ENCODE measurements at regions of chr17 and their contacts with region 1.

Region 1: DNA sequence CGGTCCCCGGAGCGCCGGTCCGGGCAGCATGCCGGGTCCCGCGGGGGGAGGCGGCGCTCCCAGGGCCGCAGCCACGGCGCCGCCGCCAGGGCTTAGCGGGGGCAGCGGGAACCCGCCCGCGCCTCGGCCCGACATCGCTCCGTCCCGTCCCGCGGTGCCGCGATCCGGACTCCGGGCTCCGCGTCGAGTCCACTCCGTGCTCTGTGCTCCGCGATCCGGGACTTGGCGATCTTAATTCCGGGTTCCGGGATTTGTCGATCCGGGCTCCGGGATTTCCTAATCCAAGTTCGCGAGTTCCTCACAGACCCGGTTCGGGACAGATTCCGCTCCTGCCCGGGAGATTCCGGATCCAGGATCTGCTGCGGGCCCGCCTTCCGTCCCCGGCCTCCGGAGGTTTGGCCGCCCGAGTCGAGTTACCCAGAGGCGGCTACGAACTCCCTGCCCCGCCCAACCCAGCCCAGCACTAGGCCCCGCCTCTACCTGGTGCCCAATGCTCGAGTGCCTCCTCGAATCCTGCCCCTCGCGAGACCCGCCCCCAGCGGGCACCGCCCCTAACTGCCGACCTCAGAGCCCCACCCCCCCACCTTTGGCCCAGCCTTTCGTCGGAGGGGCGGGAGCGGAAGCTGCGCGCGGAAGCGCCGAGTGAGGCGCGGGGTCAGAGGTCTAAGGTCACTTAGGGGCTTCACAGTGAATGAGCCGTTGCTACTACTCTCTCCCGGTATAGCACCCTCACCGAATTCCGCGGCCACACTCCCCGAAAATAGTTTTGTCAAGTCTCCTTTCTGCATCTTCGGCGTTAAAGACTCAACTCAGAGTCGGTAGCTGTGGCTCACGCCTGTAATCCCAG is at the start of gene SMARCD2:
- DNase-seq: peak; percentile 99
- ATAC-seq: peak; percentile 67 to 68
- H3K4me3 ChIP-seq: peak within 1 kb of the TSS; percentile 77 to 96 (median 91)
- H3K27ac ChIP-seq: peak within 1 kb of the TSS; percentile 96 to 99 (median 96)
- H3K4me1 ChIP-seq: peaks cover 42 to 45% of the 10 kb centered on the region in 2 donors
- H3K27me3 ChIP-seq: no peaks in the 10 kb centered on the region
- CTCF ChIP-seq: peak in 3 of 5 experiments; percentile 23 to 54 (median 47)
- POLR2A ChIP-seq: peak; percentile 80 to 82
- total RNA-seq, gene SMARCD2: 30.2 to 64.3 (median 44.9) TPM

Region 2: DNA sequence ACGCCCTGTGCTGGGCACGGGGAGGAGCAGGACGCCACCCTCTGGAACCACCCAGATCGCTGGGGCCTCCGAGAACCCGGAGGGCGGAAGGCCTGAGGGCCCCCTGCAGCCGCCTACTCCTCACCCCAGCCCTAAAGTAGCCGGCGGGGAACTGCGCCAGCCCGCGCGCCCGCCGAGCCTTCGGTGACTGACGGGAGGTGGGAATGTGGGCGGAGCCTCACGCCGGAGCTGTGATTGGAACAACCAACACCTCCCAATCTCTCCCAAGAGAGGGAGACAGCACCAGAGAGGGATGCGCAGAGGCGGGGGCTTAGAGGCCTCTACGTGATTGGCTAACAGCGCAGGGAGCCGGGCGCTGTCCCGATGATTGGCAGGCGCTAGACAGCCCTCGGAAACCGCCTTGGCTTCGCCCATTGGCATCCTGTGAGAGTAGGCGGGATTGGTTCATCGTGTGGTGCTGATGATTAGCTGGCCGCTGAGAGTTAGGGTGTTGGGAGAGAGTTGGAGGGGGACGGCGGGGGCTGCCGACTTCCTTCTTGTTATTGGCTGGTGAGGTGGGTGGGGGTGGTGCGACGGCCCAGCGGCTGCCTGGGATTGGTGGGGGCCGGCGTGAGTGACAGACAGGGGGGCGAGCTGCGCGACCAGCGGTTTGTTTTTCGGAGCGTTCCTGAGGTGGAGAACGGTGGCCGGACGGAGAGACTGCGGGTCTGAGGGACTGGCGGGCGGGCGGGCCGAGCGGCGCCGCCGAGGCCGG is 220.8 kb before region 1 on chr17 and contains the start of gene MAP3K3:
- in situ Hi-C with region 1: no loop called
- intact Hi-C with region 1: loop called (anchors 5 kb)
- DNase-seq: peak; percentile 99 to 100
- ATAC-seq: peak; percentile 92 to 93
- H3K4me3 ChIP-seq: peak within 1 kb of the TSS; percentile 67 to 84 (median 74)
- H3K27ac ChIP-seq: peak within 1 kb of the TSS; percentile 85 to 90 (median 87)
- H3K4me1 ChIP-seq: peaks cover 40 to 42% of the 10 kb centered on the region in 2 donors
- H3K27me3 ChIP-seq: no peaks in the 10 kb centered on the region
- CTCF ChIP-seq: peak in 2 of 5 experiments; percentile 23 to 26
- POLR2A ChIP-seq: peak; percentile 84 to 87
- total RNA-seq, gene MAP3K3: 21.8 to 58.7 (median 29.7) TPM

Region 3: DNA sequence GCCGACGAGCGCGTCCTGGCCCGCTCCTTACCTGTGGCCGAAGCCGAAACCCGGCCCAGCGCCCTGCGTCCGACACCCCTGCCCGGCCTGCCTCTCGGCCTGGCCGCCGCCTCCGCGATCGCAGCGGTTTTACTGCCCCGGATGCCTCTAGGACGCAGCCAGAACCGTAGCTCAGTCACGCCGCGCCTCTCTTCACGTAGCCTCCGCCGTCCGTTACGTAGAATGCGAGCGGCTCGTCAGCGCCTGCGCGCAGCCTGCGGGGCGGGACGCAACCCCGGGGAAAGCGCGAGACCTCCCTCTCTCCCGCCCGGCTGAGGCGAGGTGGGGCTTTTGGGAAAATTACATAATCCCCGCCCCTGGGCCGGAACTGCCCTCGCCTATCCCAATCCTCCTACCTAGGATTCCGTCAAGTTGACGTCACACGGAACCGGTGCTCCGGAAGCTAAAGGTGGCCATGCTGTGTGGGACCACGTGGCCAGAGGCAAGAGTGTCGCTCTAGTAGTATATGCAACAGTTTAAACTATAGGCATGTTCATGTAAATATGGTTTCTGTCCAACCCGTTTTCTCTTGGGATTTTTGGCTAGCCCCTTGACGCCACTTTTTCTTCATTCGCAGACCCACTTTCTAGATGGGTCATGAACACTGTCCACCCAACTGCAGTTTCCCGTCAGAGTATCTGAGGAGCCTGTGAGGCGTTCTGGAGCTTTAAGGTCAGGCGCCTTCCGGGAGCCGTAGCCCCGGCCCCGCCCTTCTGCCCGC is 69.2 kb before region 1 on chr17 and contains the start of gene CCDC47:
- in situ Hi-C with region 1: no loop called
- intact Hi-C with region 1: loop called (anchors 1 kb)
- DNase-seq: peak; percentile 99
- ATAC-seq: peak; percentile 92 to 96
- H3K4me3 ChIP-seq: peak within 1 kb of the TSS; percentile 92 to 98 (median 94)
- H3K27ac ChIP-seq: peak within 1 kb of the TSS; percentile 92 to 98 (median 98)
- H3K4me1 ChIP-seq: peaks cover 32 to 34% of the 10 kb centered on the region in 2 donors
- H3K27me3 ChIP-seq: no peaks in the 10 kb centered on the region
- CTCF ChIP-seq: peak in 1 of 5 experiments; percentile 5
- POLR2A ChIP-seq: peak; percentile 97 to 98
- total RNA-seq, gene CCDC47: 81.0 to 110 (median 86.8) TPM

Region 4: DNA sequence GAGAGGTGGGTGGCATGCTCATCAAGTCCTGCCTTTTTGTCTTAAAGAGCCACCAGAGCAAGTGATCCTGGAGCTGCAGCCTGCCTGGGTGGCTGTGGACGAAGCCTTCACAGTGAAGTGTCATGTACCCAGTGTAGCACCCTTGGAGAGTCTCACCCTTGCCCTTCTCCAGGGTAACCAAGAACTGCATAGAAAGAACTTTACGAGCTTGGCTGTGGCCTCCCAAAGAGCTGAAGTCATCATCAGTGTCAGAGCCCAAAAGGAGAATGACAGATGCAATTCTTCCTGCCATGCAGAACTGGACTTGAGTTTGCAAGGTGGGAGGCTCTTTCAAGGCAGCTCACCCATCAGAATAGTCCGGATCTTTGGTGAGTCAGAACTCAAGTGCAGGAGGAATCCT is 16.5 kb after region 1 on chr17:
- in situ Hi-C with region 1: no loop called
- intact Hi-C with region 1: no loop called
- DNase-seq: no peak
- ATAC-seq: no peak
- H3K4me3 ChIP-seq: no peak overlapping the region
- H3K27ac ChIP-seq: no peak overlapping the region
- H3K4me1 ChIP-seq: no peaks in the 10 kb centered on the region
- H3K27me3 ChIP-seq: no peaks in the 10 kb centered on the region
- CTCF ChIP-seq: no peak
- POLR2A ChIP-seq: no peak

Region 5: DNA sequence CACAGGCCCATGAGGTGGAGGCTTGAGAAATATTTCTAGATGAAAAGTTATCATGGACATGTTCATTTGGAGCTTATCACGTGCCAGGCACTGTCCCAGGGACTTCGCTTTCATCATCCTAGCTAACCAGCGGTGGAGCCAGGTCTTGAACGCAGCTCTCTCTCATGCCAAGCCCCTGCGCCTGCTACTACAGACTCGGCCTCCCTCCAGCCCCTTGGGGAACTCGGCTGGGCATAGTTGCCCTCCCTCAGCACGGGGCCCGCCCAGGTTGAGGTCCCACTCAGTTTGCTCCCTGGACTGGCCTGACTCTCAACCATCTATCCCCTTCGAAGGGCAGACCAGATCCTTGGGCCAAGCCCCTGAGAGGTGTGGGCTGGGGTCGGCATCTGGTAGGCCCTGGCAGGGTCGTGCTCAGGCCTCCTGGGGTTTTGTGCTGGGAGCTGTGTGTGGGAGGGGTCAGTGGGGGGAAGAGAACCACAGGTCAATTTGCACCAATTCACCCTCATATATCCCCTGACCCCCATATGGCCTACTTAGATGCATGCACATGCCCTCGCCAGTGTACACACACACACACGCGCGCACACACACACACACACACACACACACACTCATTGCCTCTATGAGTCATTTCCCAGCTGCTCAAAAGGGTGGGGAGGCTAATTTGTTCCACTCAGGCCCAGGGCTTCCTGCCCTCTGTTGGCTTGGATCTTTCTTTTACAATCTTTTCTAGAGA is 142.1 kb after region 1 on chr17:
- in situ Hi-C with region 1: no loop called
- intact Hi-C with region 1: loop called (anchors 5 kb)
- DNase-seq: peak; percentile 84 to 94
- ATAC-seq: peak; percentile 54 to 55
- H3K4me3 ChIP-seq: peak overlapping the region in 2 of 4 donors; percentile 4 to 23
- H3K27ac ChIP-seq: peak overlapping the region; percentile 98 to 100 (median 99)
- H3K4me1 ChIP-seq: peaks cover 75 to 76% of the 10 kb centered on the region in 2 donors
- H3K27me3 ChIP-seq: no peaks in the 10 kb centered on the region
- CTCF ChIP-seq: peak in 1 of 5 experiments; percentile 3
- POLR2A ChIP-seq: peak; percentile 36 to 44

Region 6: GRCh38 chr17:64016231-64016784 is 173.5 kb after region 1 on chr17:
- in situ Hi-C with region 1: no loop called
- intact Hi-C with region 1: no loop called
- DNase-seq: no peak
- ATAC-seq: no peak
- H3K4me3 ChIP-seq: peak overlapping the region in 1 of 4 donors; percentile 24
- H3K27ac ChIP-seq: peak overlapping the region; percentile 49 to 82 (median 78)
- H3K4me1 ChIP-seq: peaks cover 0 to 3% of the 10 kb centered on the region in 2 donors
- H3K27me3 ChIP-seq: no peaks in the 10 kb centered on the region
- CTCF ChIP-seq: peak in 1 of 5 experiments; percentile 17
- POLR2A ChIP-seq: no peak